Ascending aorta (tissue), 2 donors: ENCODE measurements at regions of chr12 and their contacts with region 1.

Region 1: GRCh38 chr12:20731274-20731673 is 36.1 kb downstream of the SLCO1C1 start:
- DNase-seq: no peak
- H3K4me3 ChIP-seq: no peak overlapping the region
- H3K27ac ChIP-seq: no peak overlapping the region
- H3K4me1 ChIP-seq: no peaks in the 10 kb centered on the region
- H3K27me3 ChIP-seq: no peaks in the 10 kb centered on the region
- CTCF ChIP-seq: peak in 1 of 3 experiments; percentile 26

Region 2: DNA sequence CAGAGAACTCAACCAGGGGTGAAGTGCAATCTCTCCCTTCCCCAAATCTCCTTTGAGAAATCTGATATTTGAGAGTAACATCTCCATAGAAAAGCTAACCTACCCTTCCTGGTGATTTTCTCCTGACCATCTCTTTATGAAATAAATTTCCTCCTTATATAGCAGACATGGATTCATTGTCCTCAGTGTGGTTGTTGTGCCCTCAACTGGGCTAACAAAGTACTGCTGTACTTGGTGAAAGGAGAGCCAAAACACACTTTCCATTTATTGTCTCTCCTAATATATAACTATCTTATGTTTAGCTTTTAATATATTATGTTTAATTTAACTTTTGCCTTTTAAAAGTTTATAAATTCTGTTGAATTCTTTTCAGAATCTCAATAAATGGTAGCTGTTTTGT is 334.6 kb after region 1 on chr12:
- intact Hi-C with region 1: loop called (anchors 5 kb)
- DNase-seq: no peak
- H3K4me3 ChIP-seq: no peak overlapping the region
- H3K27ac ChIP-seq: no peak overlapping the region
- H3K4me1 ChIP-seq: no peaks in the 10 kb centered on the region
- H3K27me3 ChIP-seq: no peaks in the 10 kb centered on the region
- CTCF ChIP-seq: peak; percentile 24 to 62 (median 50)